ENCODE measurements at regions of chr13 and their contacts with region 1.

Region 1: DNA sequence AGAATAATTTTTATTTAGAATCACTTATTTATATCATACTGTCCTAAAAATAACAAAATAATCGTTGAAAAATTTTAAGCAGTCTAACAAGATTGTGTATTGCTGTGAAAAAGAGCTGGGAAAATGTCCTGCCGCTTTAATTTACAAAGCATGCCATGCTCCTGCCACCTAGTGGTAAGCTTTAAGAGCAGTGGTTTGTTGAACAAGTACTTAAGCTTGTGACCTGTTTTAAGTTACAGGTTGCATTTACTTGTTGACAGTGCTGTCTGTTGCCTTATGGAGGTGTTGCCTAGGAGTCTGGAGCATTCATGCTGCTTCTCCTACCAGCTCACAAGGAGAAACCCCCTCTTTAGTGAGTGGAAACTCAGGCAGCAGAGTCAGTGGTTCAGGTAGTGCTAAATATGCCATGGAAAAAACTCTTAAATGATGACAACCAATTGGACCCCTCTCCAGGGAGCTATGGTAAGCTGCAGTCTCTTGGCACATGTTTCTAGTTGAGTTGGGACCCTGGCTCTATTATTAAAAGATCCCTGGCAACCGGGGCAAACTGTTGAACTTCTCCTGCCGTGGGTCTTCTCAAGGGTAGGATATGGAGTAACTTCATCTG is 68.4 kb downstream of the SPATA13 start:
- DNase-seq: peak; percentile 58
- ATAC-seq: peak; percentile 56
- H3K4me3 Mint-ChIP-seq: no peak overlapping the region
- H3K27ac Mint-ChIP-seq: no peak overlapping the region
- H3K4me1 Mint-ChIP-seq: peaks cover 63% of the 10 kb centered on the region
- H3K27me3 Mint-ChIP-seq: no peaks in the 10 kb centered on the region
- CTCF ChIP-seq: peak; percentile 84

Region 2: GRCh38 chr13:24039621-24040475 is 189.1 kb before region 1 on chr13:
- CTCF ChIA-PET with region 1: interaction called, 13 read pairs
- POLR2A ChIA-PET with region 1: no interaction called
- intact Hi-C with region 1: no loop called
- DNase-seq: no peak
- ATAC-seq: no peak
- H3K4me3 Mint-ChIP-seq: no peak overlapping the region
- H3K27ac Mint-ChIP-seq: no peak overlapping the region
- H3K4me1 Mint-ChIP-seq: peaks cover 9% of the 10 kb centered on the region
- H3K27me3 Mint-ChIP-seq: peaks cover 4% of the 10 kb centered on the region
- CTCF ChIP-seq: no peak

Region 3: GRCh38 chr13:24203811-24204210 is 25.1 kb before region 1 on chr13:
- CTCF ChIA-PET with region 1: interaction called, 19 read pairs
- POLR2A ChIA-PET with region 1: no interaction called
- intact Hi-C with region 1: no loop called
- DNase-seq: peak; percentile 24
- ATAC-seq: peak; percentile 93
- H3K4me3 Mint-ChIP-seq: peak overlapping the region; percentile 20
- H3K27ac Mint-ChIP-seq: peak overlapping the region; percentile 35
- H3K4me1 Mint-ChIP-seq: peaks cover 46% of the 10 kb centered on the region
- H3K27me3 Mint-ChIP-seq: no peaks in the 10 kb centered on the region
- CTCF ChIP-seq: no peak

Region 4: DNA sequence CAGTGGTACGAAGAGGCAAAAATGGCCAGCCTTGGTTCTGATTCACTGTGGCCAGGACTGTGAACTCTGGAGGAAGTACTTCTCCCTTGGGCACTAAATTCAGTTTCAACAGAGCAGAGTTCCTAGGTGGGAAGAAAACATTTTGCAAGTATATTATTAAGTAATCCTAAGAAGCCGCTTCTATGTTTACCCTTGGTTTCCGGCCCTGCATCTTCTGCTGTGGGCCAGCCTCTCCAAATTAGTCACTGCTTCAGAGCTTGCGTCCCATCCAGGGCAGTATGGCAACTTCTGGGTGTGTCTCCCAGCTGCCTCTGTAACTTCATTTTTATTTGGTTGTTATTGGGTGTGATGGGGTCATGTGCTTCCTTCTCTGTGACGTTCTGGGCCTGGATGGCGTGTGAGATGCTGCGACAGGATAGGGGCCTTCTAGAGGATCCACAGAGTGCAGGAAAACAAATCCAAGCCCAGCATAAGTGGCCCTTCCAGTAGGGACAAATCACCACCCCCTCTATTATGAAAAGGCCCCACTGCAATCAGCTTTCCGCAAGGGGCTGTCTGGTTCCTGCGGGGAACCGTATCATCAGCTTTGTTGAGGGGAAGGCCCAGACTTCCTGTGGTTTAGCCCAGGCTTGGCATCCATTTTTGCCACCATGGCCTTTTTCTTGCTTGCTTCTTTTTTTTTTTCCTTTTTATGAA is 25.3 kb after region 1 on chr13:
- CTCF ChIA-PET with region 1: interaction called, 13 read pairs
- POLR2A ChIA-PET with region 1: interaction called, 6 read pairs
- intact Hi-C with region 1: no loop called
- DNase-seq: peak; percentile 81
- ATAC-seq: peak; percentile 68
- H3K4me3 Mint-ChIP-seq: peak overlapping the region; percentile 82
- H3K27ac Mint-ChIP-seq: peak overlapping the region; percentile 90
- H3K4me1 Mint-ChIP-seq: peaks cover 77% of the 10 kb centered on the region
- H3K27me3 Mint-ChIP-seq: no peaks in the 10 kb centered on the region
- CTCF ChIP-seq: no peak

Region 5: DNA sequence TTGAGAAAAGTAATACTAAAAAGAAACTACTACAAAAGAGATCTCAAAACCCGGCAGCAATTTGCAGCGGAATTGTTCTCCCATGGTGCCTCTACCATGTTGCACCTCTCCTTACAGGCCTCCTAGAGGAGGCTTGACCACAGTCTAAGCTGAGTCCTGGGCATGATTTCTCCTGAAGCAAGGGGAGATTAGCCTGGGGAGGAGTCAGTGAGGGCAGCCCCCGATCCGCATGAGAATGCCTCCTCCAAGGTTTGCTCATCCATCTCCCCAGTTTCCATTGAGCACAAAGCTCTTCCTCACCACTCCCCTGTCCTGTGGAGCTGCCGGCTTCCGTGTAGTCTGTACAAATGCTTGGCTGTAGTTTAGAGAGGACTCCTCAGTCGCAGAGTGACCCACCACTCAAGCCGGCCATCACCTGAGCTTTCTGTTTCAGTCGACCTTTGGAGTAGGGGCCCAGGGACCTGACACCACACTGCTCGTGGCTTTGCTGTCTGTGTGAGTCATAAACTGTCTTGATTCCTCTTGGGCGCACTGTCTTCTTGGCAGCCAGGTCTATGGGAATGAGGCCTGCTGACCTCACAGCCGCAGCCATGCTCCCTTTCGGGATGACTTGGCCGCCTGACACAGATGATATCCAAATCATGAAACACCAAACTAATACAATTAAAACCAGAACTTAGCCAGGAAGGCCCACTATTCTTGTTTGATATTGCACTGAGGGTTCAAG is 152.7 kb after region 1 on chr13:
- CTCF ChIA-PET with region 1: no interaction called
- POLR2A ChIA-PET with region 1: no interaction called
- intact Hi-C with region 1: no loop called
- DNase-seq: peak; percentile 12
- ATAC-seq: peak; percentile 34
- H3K4me3 Mint-ChIP-seq: no peak overlapping the region
- H3K27ac Mint-ChIP-seq: no peak overlapping the region
- H3K4me1 Mint-ChIP-seq: peaks cover 13% of the 10 kb centered on the region
- H3K27me3 Mint-ChIP-seq: no peaks in the 10 kb centered on the region
- CTCF ChIP-seq: no peak

Region 6: DNA sequence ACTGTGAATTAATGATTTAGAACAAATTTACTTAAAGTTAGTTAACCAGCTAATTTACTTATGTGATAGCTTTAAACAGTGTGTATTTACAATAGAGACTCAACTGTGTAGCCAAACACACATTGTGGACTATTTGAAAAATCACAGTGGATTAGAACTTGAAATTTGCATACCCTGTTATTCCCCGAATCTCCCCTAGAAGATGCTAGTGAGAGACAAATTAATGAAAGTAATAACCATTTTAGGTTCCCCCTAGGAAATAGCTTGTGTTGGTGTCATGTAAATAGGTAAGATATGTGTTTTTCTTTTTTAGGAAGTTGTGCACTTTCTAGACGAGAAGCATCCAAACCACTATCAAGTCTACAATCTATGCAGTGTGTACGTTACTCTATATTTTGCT is 178.9 kb after region 1 on chr13:
- CTCF ChIA-PET with region 1: no interaction called
- POLR2A ChIA-PET with region 1: no interaction called
- intact Hi-C with region 1: no loop called
- DNase-seq: no peak
- ATAC-seq: no peak
- H3K4me3 Mint-ChIP-seq: no peak overlapping the region
- H3K27ac Mint-ChIP-seq: no peak overlapping the region
- H3K4me1 Mint-ChIP-seq: no peaks in the 10 kb centered on the region
- H3K27me3 Mint-ChIP-seq: peaks cover 3% of the 10 kb centered on the region
- CTCF ChIP-seq: peak; percentile 24

Measured in activated CD8-positive, alpha-beta T cell treated with anti-CD3 and anti-CD28 coated beads for 36 hours (primary cell).